ENCODE measurements at regions of chr5 and their contacts with region 1.

Region 1: DNA sequence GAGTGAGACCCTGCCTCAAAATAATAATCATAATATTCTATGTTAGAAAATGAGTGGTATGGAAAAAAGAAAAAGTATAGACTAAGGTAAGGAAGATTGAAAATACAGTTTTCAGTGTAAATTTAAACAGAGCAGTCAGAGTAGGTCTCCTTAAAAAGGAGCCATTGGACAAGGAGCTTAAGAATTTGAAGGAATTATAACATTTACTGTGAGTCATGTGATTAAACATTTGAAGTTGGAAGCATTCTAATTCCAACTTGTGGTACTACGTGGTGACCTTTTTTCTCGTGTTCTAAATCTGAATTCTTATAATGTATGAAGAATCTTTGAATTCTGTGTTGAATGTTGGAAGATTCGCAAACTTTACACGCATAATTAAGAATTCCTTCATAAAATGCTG is 39.3 kb upstream of the TMEM171 start:
- DNase-seq: no peak
- ATAC-seq: no peak
- H3K4me3 ChIP-seq: no peak overlapping the region
- H3K4me3 Mint-ChIP-seq: no peak overlapping the region
- H3K27ac ChIP-seq: no peak overlapping the region
- H3K27ac Mint-ChIP-seq: no peak overlapping the region
- H3K4me1 ChIP-seq: no peaks in the 10 kb centered on the region
- H3K4me1 Mint-ChIP-seq: no peaks in the 10 kb centered on the region
- H3K27me3 ChIP-seq: no peaks in the 10 kb centered on the region
- H3K27me3 Mint-ChIP-seq: peaks cover 16% of the 10 kb centered on the region
- CTCF ChIP-seq: no peak

Region 2: GRCh38 chr5:72908664-72909063 is 172.4 kb before region 1 on chr5:
- CTCF ChIA-PET with region 1: no interaction called
- POLR2A ChIA-PET with region 1: no interaction called
- intact Hi-C with region 1: no loop called
- DNase-seq: no peak
- ATAC-seq: no peak
- H3K4me3 ChIP-seq: no peak overlapping the region
- H3K4me3 Mint-ChIP-seq: no peak overlapping the region
- H3K27ac ChIP-seq: no peak overlapping the region
- H3K27ac Mint-ChIP-seq: no peak overlapping the region
- H3K4me1 ChIP-seq: no peaks in the 10 kb centered on the region
- H3K4me1 Mint-ChIP-seq: no peaks in the 10 kb centered on the region
- H3K27me3 ChIP-seq: no peaks in the 10 kb centered on the region
- H3K27me3 Mint-ChIP-seq: no peaks in the 10 kb centered on the region
- CTCF ChIP-seq: no peak

Region 3: DNA sequence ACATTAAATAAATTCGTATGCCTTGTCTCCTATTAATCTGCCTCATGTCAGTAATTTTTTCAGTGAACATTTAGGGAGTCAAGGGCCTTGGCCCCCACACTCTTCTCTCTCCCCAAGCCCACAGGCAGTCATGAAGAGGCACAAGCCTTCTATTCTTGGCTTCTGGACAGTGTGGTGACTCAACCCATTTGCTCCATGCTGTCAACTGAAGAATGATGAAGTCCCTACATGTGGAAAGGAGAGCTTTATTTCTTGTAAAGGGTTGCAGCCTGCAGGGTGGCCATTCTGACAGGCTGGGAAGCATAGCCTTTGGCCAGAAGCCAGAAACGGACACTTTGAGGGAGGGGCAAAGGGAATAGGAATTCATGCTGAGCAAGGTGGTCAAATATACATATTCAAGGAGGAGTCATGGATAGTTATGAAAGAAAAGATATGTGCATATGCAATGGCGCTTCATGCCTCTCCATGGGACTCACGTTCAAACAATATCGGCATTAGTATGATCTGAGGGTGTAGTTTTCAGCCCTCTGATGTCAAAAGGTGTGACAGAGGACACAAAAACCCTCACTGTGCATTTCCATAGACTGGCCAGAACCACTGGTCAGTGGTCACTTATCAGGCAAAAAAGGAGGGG is 453.0 kb after region 1 on chr5:
- CTCF ChIA-PET with region 1: no interaction called
- POLR2A ChIA-PET with region 1: no interaction called
- intact Hi-C with region 1: loop called (anchors 2 to 5 kb)
- DNase-seq: no peak
- ATAC-seq: no peak
- H3K4me3 ChIP-seq: no peak overlapping the region
- H3K4me3 Mint-ChIP-seq: no peak overlapping the region
- H3K27ac ChIP-seq: no peak overlapping the region
- H3K27ac Mint-ChIP-seq: no peak overlapping the region
- H3K4me1 ChIP-seq: peaks cover 4% of the 10 kb centered on the region
- H3K4me1 Mint-ChIP-seq: no peaks in the 10 kb centered on the region
- H3K27me3 ChIP-seq: peaks cover 5 to 6% of the 10 kb centered on the region in 2 experiments
- H3K27me3 Mint-ChIP-seq: peaks cover 40% of the 10 kb centered on the region
- CTCF ChIP-seq: no peak